GM12878 (cell line): ENCODE measurements at regions of chrX and their contacts with region 1.

Region 1: GRCh38 chrX:94831364-94831763 is 1157.4 kb downstream of the FAM133A start:
- DNase-seq: no peak
- ATAC-seq: peak; percentile 54; the same call in 2 of the 3 replicates
- H3K4me3 ChIP-seq: no peak overlapping the region
- H3K27ac ChIP-seq: no peak overlapping the region
- H3K4me1 ChIP-seq: no peaks in the 10 kb centered on the region
- H3K27me3 ChIP-seq: no peaks in the 10 kb centered on the region
- CTCF ChIP-seq: peak in 2 of 3 experiments; percentile 18 to 37; a peak in 3 of 6 replicates
- EP300 ChIP-seq: no peak
- POLR2A ChIP-seq: no peak
- RAD21 ChIP-seq: peak; percentile 62

Region 2: DNA sequence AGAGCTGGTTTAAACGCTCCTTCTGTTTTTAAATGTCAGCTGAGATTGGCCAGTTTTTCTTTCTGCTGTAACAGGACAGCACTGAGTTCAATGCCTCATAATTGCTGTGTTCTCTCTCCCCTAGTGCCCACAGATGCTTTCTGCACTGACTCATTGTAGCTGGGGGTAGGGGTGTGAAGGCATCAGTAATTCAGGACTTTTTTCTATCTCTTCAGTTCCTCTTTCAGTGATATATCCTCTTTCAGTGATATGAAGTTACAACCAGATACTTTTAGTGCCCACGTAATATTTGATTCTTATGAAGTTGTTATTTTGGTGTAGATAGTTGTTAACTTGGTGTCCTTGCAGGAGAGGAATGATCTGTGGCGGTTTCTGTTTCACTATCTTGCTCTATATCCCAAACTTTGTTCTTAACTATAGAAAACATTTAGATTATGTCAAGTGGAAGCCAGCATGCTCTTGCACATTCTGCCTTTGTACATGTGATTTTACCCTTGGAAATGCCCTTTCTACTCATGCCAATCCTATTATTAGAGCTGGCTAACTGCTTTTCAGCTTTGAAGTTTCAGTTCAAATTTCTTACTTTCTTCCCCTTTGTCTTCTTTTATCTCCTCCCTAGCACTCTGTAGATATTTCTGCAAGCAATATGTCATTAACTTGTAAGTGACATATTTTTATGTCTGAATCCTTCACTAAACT is 101.1 kb after region 1 on chrX:
- CTCF ChIA-PET with region 1: interaction called, 6 read pairs
- POLR2A ChIA-PET with region 1: interaction called, 4 read pairs
- RAD21 ChIA-PET with region 1: interaction called, 12 read pairs
- SMC1A ChIA-PET with region 1: interaction called, 10 read pairs
- in situ Hi-C with region 1: no loop called
- intact Hi-C with region 1: no loop called
- DNase-seq: peak; percentile 12
- ATAC-seq: peak; percentile 97
- H3K4me3 ChIP-seq: no peak overlapping the region
- H3K27ac ChIP-seq: no peak overlapping the region
- H3K4me1 ChIP-seq: no peaks in the 10 kb centered on the region
- H3K27me3 ChIP-seq: no peaks in the 10 kb centered on the region
- CTCF ChIP-seq: no peak
- EP300 ChIP-seq: peak in 1 of 2 experiments; percentile 38; a peak in 1 of 4 replicates
- POLR2A ChIP-seq: no peak
- RAD21 ChIP-seq: no peak

Region 3: GRCh38 chrX:94977562-94977961 is 146.2 kb after region 1 on chrX:
- CTCF ChIA-PET with region 1: interaction called, 3 read pairs
- POLR2A ChIA-PET with region 1: no interaction called
- RAD21 ChIA-PET with region 1: interaction called, 12 read pairs
- SMC1A ChIA-PET with region 1: interaction called, 5 read pairs
- in situ Hi-C with region 1: no loop called
- intact Hi-C with region 1: no loop called
- DNase-seq: no peak
- ATAC-seq: peak; percentile 47
- H3K4me3 ChIP-seq: no peak overlapping the region
- H3K27ac ChIP-seq: no peak overlapping the region
- H3K4me1 ChIP-seq: no peaks in the 10 kb centered on the region
- H3K27me3 ChIP-seq: no peaks in the 10 kb centered on the region
- CTCF ChIP-seq: no peak
- EP300 ChIP-seq: no peak
- POLR2A ChIP-seq: no peak
- RAD21 ChIP-seq: no peak

Region 4: DNA sequence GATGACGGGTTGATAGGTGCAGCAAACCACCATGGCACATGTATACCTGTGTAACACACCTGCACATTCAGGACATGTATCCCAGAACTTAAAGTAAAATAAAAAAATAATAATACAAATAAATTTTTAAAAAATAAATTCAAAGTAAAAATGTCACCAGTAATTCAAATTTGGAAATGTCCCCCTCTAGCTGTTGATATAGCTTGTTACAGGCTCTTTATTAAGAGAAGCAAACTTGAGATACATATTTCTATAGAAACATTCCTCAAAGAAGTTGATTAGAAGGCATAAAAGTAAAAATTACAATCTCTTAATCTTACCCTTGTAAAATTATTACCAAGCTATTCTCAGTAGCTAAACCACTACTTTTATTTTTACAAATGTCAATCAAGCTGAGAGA is 239.7 kb after region 1 on chrX:
- CTCF ChIA-PET with region 1: interaction called, 44 read pairs
- POLR2A ChIA-PET with region 1: interaction called, 3 read pairs
- RAD21 ChIA-PET with region 1: interaction called, 35 read pairs
- SMC1A ChIA-PET with region 1: interaction called, 29 read pairs
- in situ Hi-C with region 1: loop called (anchors 10 kb)
- intact Hi-C with region 1: loop called (anchors 1 kb)
- DNase-seq: no peak
- ATAC-seq: no peak
- H3K4me3 ChIP-seq: no peak overlapping the region
- H3K27ac ChIP-seq: no peak overlapping the region
- H3K4me1 ChIP-seq: no peaks in the 10 kb centered on the region
- H3K27me3 ChIP-seq: no peaks in the 10 kb centered on the region
- CTCF ChIP-seq: no peak; a peak in 1 of 6 replicates
- EP300 ChIP-seq: no peak
- POLR2A ChIP-seq: no peak
- RAD21 ChIP-seq: no peak